Caco-2 (cell line): ENCODE measurements at regions of chr4 and their contacts with region 1.

Region 1: DNA sequence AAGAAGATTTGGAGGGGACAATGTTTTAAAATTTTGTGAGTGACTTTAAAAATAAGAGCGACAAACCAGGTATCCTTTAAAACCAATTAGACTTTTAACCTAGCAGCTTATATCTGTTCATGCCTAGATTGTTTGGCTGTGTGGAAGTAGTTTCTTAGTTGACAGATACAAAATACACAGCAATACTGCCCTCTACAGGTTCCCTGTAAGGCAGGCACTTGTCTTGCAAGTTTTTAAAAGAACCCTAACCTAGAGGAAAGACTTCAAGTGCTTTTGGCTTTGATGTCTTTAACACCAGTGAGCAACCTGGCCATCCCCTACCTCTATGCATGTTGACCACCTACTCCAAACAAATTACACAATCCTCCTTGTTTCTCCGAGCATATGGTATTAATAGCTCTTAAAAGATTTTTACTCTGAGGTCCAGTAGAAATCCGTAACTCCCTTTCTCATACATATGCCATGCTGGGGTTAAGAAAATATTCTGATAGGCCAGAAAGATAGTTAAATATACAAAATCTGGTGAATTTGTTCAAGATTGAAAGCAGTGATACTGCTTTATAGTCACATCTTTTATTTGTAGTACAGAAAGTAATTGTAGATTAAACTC is 273.0 kb downstream of the ARHGAP24 start:
- DNase-seq: peak in 1 of 2 experiments; percentile 49
- H3K4me3 ChIP-seq: no peak overlapping the region
- H3K4me3 Mint-ChIP-seq: no peak overlapping the region
- H3K27ac Mint-ChIP-seq: no peak overlapping the region
- H3K4me1 ChIP-seq: no peaks in the 10 kb centered on the region
- H3K4me1 Mint-ChIP-seq: no peaks in the 10 kb centered on the region
- H3K27me3 ChIP-seq: no peaks in the 10 kb centered on the region
- H3K27me3 Mint-ChIP-seq: peaks cover 5% of the 10 kb centered on the region
- CTCF ChIP-seq: peak; percentile 71 to 77

Region 2: GRCh38 chr4:85084380-85085094 is 663.5 kb before region 1 on chr4:
- CTCF ChIA-PET with region 1: interaction called, 3 read pairs
- POLR2A ChIA-PET with region 1: no interaction called
- intact Hi-C with region 1: loop called (anchors 2 kb)
- DNase-seq: peak in 1 of 2 experiments; percentile 62
- H3K4me3 ChIP-seq: no peak overlapping the region
- H3K4me3 Mint-ChIP-seq: no peak overlapping the region
- H3K27ac Mint-ChIP-seq: no peak overlapping the region
- H3K4me1 ChIP-seq: no peaks in the 10 kb centered on the region
- H3K4me1 Mint-ChIP-seq: no peaks in the 10 kb centered on the region
- H3K27me3 ChIP-seq: no peaks in the 10 kb centered on the region; the same call in 1 of the 2 replicates
- H3K27me3 Mint-ChIP-seq: peaks cover 4% of the 10 kb centered on the region
- CTCF ChIP-seq: peak; percentile 53 to 68

Region 3: DNA sequence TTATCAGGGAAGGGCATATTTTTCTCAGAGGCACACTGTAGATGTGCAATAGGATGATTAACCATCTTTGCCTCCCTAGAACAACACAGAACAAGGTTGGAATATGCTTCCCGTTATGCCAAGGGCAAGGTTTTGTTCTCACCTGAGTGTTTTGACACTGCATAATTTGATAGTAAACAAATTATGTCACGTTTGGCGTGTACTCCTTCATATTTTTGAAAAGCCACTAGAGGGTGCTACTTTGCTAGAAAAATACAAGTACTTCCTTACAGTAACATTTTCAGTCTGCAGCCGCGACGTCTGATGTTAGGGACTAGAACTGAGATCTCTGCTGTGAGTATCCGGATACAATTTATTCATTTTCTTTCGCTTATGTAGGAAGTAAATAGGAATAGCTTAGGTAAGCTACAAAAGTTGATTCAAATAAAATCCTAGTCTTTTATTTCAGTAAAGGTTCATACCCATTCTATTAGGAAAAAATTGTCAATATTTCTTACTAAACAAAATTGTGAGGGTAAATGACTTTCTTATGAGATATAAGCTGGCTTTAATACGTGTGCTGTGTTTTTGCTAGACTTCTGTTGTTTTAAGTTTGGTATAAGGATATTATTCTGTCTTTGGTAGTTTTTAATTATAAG is 600.4 kb before region 1 on chr4:
- CTCF ChIA-PET with region 1: interaction called, 3 read pairs
- POLR2A ChIA-PET with region 1: no interaction called
- intact Hi-C with region 1: loop called (anchors 1 kb)
- DNase-seq: peak in 1 of 2 experiments; percentile 39
- H3K4me3 ChIP-seq: no peak overlapping the region
- H3K4me3 Mint-ChIP-seq: no peak overlapping the region
- H3K27ac Mint-ChIP-seq: no peak overlapping the region
- H3K4me1 ChIP-seq: no peaks in the 10 kb centered on the region
- H3K4me1 Mint-ChIP-seq: no peaks in the 10 kb centered on the region
- H3K27me3 ChIP-seq: no peaks in the 10 kb centered on the region
- H3K27me3 Mint-ChIP-seq: peaks cover 4% of the 10 kb centered on the region
- CTCF ChIP-seq: peak; percentile 39 to 46

Region 4: DNA sequence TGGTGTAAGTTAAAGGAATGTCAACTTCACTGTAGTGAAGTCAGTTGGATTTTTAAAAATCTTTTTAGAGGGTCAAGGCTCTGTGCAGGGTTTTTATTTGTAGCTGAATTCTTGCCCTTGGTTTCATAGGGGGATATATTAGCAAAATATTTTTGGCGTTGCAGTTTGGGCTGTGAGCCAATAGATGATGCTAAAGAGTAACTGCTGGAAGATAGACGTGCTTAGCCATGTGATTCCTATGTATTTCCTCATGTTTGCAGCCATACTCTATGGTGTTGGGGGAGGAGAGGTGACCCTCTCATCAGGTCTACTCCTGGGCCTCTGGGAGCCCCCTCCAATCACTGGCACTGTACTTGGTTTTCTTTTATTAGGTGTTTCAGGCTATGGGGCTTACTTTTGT is 519.7 kb before region 1 on chr4:
- CTCF ChIA-PET with region 1: no interaction called
- POLR2A ChIA-PET with region 1: no interaction called
- intact Hi-C with region 1: loop called (anchors 1 kb)
- DNase-seq: no peak
- H3K4me3 ChIP-seq: no peak overlapping the region
- H3K4me3 Mint-ChIP-seq: no peak overlapping the region
- H3K27ac Mint-ChIP-seq: no peak overlapping the region
- H3K4me1 ChIP-seq: no peaks in the 10 kb centered on the region
- H3K4me1 Mint-ChIP-seq: no peaks in the 10 kb centered on the region
- H3K27me3 ChIP-seq: no peaks in the 10 kb centered on the region
- H3K27me3 Mint-ChIP-seq: no peaks in the 10 kb centered on the region
- CTCF ChIP-seq: no peak

Region 5: DNA sequence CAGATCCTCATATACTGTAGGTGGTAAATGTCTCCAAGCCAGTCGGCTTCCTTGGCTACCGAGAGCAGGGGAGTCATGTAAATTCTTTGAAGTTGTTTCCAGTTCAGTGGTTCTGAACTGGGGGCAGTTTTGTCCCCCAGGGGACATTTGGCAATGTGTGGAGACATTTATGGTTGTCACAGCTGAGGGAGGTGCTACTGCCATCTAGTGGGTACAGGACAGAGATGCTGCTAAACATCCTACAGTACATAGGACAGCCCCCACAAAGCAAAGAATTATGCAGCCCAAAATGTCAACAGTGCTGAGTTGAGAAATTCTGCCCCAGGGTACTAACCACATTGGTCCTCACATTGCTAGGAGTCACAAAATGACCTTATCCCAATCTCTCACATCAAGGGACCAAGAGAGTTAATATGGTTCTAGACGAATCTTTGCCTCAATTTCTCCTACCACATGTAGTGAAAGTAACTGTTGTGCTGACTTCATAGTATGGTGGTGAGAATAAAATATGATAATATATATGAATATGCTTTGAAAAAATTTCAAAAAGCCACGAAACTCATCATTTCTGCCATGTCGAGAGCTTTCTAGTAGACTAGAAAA is 377.5 kb before region 1 on chr4:
- CTCF ChIA-PET with region 1: no interaction called
- POLR2A ChIA-PET with region 1: no interaction called
- intact Hi-C with region 1: loop called (anchors 2 kb)
- DNase-seq: peak; percentile 42 to 43
- H3K4me3 ChIP-seq: no peak overlapping the region
- H3K4me3 Mint-ChIP-seq: no peak overlapping the region
- H3K27ac Mint-ChIP-seq: no peak overlapping the region
- H3K4me1 ChIP-seq: no peaks in the 10 kb centered on the region
- H3K4me1 Mint-ChIP-seq: no peaks in the 10 kb centered on the region
- H3K27me3 ChIP-seq: no peaks in the 10 kb centered on the region
- H3K27me3 Mint-ChIP-seq: peaks cover 7% of the 10 kb centered on the region
- CTCF ChIP-seq: peak; percentile 54 to 73

Region 6: GRCh38 chr4:85423431-85423830 is 324.6 kb before region 1 on chr4:
- CTCF ChIA-PET with region 1: interaction called, 4 read pairs
- POLR2A ChIA-PET with region 1: no interaction called
- intact Hi-C with region 1: loop called (anchors 1 kb)
- DNase-seq: no peak
- H3K4me3 ChIP-seq: no peak overlapping the region
- H3K4me3 Mint-ChIP-seq: no peak overlapping the region
- H3K27ac Mint-ChIP-seq: no peak overlapping the region
- H3K4me1 ChIP-seq: no peaks in the 10 kb centered on the region
- H3K4me1 Mint-ChIP-seq: no peaks in the 10 kb centered on the region
- H3K27me3 ChIP-seq: no peaks in the 10 kb centered on the region
- H3K27me3 Mint-ChIP-seq: no peaks in the 10 kb centered on the region
- CTCF ChIP-seq: no peak

Region 7: GRCh38 chr4:85720735-85721134 is 27.3 kb before region 1 on chr4:
- CTCF ChIA-PET with region 1: no interaction called
- POLR2A ChIA-PET with region 1: no interaction called
- intact Hi-C with region 1: no loop called
- DNase-seq: no peak
- H3K4me3 ChIP-seq: no peak overlapping the region
- H3K4me3 Mint-ChIP-seq: no peak overlapping the region
- H3K27ac Mint-ChIP-seq: no peak overlapping the region
- H3K4me1 ChIP-seq: no peaks in the 10 kb centered on the region
- H3K4me1 Mint-ChIP-seq: peaks cover 12% of the 10 kb centered on the region
- H3K27me3 ChIP-seq: no peaks in the 10 kb centered on the region
- H3K27me3 Mint-ChIP-seq: peaks cover 9% of the 10 kb centered on the region
- CTCF ChIP-seq: no peak